ENCODE measurements at regions of chr17 and their contacts with region 1.

Region 1: GRCh38 chr17:78133971-78134898 is 3.7 kb downstream of the TMC8 start:
- DNase-seq: peak; percentile 90
- ATAC-seq: peak; percentile 12
- H3K4me3 Mint-ChIP-seq: peak overlapping the region; percentile 74
- H3K27ac Mint-ChIP-seq: peak overlapping the region; percentile 84
- H3K4me1 Mint-ChIP-seq: peaks cover 78% of the 10 kb centered on the region
- H3K27me3 Mint-ChIP-seq: no peaks in the 10 kb centered on the region

Region 2: DNA sequence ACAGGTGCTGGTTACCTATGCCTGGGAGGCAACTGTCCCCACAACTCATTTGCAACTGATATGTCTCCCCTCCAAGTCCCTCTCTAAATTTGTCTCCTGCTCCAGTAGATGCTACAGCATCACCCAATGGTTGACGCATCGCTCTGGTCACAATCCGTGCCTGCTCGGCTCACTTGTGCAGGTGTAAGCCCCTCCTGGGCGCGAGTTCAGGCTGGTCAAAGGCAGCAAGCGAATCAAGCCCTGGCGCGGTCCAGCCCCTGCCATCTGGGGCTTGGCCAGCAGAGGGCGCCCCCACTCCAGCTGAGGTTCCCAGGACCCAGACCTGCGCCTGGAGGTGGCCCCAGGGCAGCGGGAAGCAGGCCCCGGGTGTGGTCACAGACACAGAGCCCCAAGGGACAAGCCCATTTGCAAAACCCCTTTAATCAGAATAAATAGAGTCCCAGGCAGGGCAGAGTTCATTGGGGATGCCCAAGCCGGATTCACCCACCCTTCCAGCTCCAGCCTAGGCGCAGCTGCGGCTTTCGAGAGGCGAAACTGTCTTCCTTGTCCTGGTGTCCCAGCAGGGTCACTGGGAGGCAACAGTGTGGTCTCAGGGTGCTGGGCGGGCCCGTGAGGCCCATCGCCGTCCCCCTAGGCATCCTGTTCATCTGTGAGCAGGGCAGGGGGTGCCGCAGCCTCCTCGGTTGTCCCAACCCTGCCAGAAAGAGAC is 21.6 kb before region 1 on chr17:
- CTCF ChIA-PET with region 1: interaction called, 63 read pairs
- POLR2A ChIA-PET with region 1: interaction called, 182 read pairs
- DNase-seq: peak; percentile 84
- ATAC-seq: peak; percentile 80
- H3K4me3 Mint-ChIP-seq: no peak overlapping the region
- H3K27ac Mint-ChIP-seq: peak overlapping the region; percentile 81
- H3K4me1 Mint-ChIP-seq: peaks cover 35% of the 10 kb centered on the region
- H3K27me3 Mint-ChIP-seq: no peaks in the 10 kb centered on the region

Measured in activated CD8-positive, alpha-beta T cell treated with anti-CD3 and anti-CD28 coated beads, Interleukin-2, amount 10 ng/mL, durations not matched to agents 7 days and 5 days (primary cell).